WTC11 (cell line): ENCODE measurements at regions of chr11 and their contacts with region 1.

Region 1: DNA sequence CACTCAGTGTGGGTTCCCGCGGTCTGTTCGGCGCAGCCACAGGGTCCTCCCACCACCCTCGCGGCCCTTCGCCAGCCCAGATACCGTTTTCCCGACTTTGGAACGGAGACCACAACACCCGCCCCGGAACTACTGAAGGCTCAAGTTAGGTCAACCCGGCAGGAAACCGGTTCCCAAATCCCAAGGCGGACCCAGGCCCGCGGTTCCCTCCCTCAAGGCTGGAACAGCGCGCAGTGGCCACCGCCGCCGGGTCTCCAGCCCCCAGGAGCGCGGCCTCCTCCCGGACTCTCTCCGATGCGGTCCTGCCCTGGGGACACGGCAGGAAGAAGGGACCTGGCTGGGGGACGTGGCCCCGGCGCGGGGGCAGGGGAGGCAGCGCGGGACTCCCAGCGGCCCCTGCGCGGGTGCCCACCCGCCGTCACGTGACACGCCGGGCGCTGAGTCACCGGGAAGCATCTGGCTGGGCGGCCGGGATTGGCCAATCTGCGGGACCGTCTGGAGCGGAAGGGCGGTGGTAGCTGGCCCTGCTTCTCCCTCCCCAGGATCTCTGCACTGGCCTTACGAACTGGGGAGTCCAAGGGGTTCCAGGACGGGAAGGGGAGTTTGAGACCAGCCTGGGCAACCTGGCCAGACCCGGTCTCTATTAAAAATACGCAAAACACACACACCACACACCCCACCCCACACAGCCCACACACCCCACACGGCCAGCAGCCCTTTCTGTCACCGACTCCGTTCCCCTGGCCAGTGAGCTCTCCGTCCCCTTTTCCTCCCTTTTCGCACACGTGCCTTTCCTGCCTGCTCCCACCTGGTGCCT is 21.5 kb upstream of the MALAT1 start:
- DNase-seq: peak; percentile 87
- ATAC-seq: peak; percentile 80
- H3K4me3 Mint-ChIP-seq: peak overlapping the region; percentile 79
- H3K27ac Mint-ChIP-seq: peak overlapping the region; percentile 99
- H3K4me1 Mint-ChIP-seq: peaks cover 34% of the 10 kb centered on the region
- H3K27me3 Mint-ChIP-seq: no peaks in the 10 kb centered on the region; the same call in 1 of the 2 replicates
- CTCF ChIP-seq: no peak

Region 2: DNA sequence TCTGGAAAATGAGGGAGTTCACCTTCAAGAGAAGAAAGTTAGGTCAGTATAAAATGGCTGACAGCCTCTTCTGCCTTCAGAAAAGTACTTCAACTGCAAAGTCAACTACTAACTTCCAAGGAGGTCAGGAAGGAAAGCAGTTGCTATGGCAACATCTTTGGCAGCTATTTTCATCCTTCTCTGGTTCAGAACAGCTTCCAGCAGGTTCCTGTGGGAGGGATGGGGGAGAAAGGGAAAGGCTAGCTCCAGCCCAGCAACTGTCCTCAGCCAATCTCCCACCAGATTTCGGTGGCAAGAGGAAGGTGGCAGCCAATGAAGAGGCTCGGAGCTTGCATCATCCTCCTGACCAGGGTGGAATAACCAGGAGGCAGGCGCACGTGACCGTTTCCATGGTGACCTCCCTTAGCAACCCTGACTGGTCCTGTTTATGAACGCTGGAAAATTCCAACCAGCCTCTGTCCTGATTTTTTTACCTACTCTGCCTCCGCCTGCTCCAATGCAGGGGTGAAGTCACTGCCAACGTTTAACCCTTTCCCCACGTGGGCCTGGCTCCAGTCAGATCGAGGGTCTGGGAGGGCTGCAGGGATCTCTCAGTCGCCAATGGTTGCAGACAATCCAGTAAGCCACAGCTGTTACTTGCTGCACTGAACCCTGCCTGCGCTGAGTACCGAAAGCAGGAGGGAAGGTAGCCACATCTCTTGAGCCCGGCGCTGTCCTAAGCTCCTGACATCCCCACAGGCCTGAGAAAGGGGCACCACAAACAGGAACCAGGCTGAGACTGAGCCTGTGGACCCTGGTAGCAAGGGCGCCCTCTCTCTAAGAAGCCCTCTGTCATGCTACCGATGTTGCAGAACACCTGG is 10.3 kb after region 1 on chr11:
- CTCF ChIA-PET with region 1: interaction called, 129 read pairs
- POLR2A ChIA-PET with region 1: interaction called, 105 read pairs
- DNase-seq: peak; percentile 96
- ATAC-seq: peak; percentile 86
- H3K4me3 Mint-ChIP-seq: peak overlapping the region; percentile 62
- H3K27ac Mint-ChIP-seq: peak overlapping the region; percentile 100
- H3K4me1 Mint-ChIP-seq: peaks cover 82% of the 10 kb centered on the region
- H3K27me3 Mint-ChIP-seq: peaks cover 4% of the 10 kb centered on the region
- CTCF ChIP-seq: no peak

Region 3: DNA sequence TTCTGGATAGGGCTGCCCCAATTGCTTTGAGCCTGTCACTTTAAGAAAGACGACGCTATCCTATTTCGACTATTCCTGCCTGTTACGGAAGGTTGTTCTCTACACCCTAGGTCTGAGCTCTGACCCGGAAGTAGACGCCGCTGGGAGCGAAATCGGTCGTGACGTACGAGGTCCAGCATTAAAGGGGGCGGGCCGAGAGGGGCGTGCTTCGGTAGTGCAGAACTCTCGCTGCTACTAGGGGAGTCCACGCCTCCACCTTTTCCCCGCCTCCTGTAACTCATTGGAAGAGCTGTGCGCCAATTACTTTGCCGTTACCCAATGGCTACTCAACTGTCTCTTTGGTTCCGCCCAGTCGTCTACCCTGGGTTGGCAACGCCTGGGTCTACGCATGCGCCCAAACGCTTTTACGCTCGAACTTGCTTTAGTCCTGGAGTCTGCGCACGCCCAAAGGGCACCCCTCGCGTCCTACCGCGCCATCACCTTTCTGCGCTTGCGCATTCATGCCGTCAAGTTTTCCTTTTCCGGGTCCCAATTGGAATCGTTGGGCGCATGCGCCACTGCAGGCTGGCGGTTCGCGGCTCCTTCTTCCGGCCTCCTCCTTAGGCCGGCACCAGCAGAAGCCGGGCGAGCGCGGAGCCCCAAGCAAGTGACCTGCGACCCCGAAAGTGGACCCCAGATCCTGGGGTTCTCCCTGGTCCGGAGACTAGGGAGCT is 138.0 kb after region 1 on chr11 and contains the start of gene PCNX3:
- CTCF ChIA-PET with region 1: no interaction called
- POLR2A ChIA-PET with region 1: no interaction called
- DNase-seq: peak; percentile 100
- ATAC-seq: peak; percentile 91
- H3K4me3 Mint-ChIP-seq: peak within 1 kb of the TSS; percentile 94
- H3K27ac Mint-ChIP-seq: peak within 1 kb of the TSS; percentile 98
- H3K4me1 Mint-ChIP-seq: peaks cover 21% of the 10 kb centered on the region
- H3K27me3 Mint-ChIP-seq: no peaks in the 10 kb centered on the region; the same call in 1 of the 2 replicates
- CTCF ChIP-seq: no peak
- total RNA-seq, gene PCNX3: 44.6 to 51.6 TPM (median 45.8 TPM) in 3 replicates